PC-3 (cell line): ENCODE measurements at regions of chr13 and their contacts with region 1.

Region 1: DNA sequence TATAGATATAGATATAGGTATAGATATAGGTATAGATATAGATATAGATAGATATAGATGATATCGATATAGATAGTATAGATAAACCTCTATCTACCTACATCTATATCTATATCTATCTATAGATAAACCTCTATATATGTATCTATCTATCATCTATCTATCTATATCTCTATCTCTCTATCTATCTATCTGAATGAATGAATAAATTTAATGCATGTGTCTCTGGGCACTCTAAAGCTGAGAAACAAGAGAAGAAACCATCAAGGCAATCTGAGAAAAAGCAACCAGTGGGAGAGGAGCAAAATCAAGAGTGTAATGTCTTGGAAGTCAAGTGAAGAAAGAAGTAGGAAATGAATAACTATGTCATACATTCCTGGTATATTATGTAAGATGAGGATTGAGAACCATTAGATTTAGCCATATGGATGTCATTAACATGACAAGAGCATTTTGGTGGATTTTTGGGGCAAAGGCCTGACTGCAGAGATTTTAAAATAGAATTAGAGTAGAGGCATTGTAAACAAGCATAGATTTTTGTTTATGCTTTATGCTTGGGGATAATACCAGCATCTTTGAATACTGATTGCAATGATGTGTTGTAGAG is 1262.7 kb upstream of the MIR17HG start:
- DNase-seq: no peak
- ATAC-seq: no peak
- H3K4me3 ChIP-seq: no peak overlapping the region
- H3K27ac ChIP-seq: no peak overlapping the region
- H3K4me1 ChIP-seq: no peaks in the 10 kb centered on the region
- H3K27me3 ChIP-seq: no peaks in the 10 kb centered on the region
- CTCF ChIP-seq: no peak

Region 2: DNA sequence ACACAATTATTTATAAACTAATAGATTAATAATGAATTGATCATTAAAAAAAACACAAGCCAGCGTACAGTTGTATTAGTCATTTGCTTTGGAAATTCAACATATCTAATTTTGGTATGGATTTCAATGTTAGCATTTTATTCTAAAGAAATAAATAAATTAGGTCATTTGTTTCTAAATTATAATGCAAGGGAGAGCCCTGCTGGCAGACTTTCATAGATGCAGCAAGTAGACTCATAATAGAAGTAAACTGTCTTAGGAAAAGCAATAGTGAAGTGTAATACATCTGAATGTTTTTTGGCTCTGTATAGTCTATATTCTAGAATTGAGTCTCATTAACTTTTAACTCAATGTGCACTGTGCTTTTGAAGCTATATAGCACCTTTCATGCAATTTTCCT is 280.3 kb after region 1 on chr13:
- CTCF ChIA-PET with region 1: no interaction called
- POLR2A ChIA-PET with region 1: no interaction called
- intact Hi-C with region 1: loop called (anchors 1 kb)
- DNase-seq: no peak
- ATAC-seq: peak; percentile 33; the same call in 1 of the 2 replicates
- H3K4me3 ChIP-seq: no peak overlapping the region
- H3K27ac ChIP-seq: no peak overlapping the region
- H3K4me1 ChIP-seq: no peaks in the 10 kb centered on the region
- H3K27me3 ChIP-seq: no peaks in the 10 kb centered on the region
- CTCF ChIP-seq: peak; percentile 40; the same call in 1 of the 2 replicates

Region 3: DNA sequence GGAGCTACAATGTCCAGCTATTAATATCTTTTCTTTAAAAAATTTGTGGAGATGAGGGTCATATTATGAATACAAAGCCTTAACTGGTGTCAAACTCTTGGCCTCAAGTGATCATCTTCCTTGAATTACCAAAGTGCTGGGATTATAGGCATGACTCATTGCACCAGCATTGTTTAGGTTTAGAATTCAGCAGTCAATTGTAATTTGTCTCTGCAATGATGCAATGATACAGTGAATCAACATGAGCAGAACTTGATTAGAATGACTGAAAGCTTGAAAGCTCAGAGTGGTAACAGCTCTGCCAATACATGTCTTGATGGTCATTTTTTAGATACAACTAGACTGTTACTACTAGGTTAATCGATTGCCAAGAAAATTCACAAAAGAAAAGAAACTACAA is 509.9 kb after region 1 on chr13:
- CTCF ChIA-PET with region 1: interaction called, 13 read pairs
- POLR2A ChIA-PET with region 1: no interaction called
- intact Hi-C with region 1: no loop called
- DNase-seq: peak; percentile 62
- ATAC-seq: peak; percentile 58; the same call in 1 of the 2 replicates
- H3K4me3 ChIP-seq: no peak overlapping the region
- H3K27ac ChIP-seq: no peak overlapping the region
- H3K4me1 ChIP-seq: no peaks in the 10 kb centered on the region; the same call in 1 of the 2 replicates
- H3K27me3 ChIP-seq: no peaks in the 10 kb centered on the region
- CTCF ChIP-seq: no peak